Naive thymus-derived CD4-positive, alpha-beta T cell (primary cell): ENCODE measurements at regions of chr5 and their contacts with region 1.

Region 1: GRCh38 chr5:95961617-95962474 is at the start of gene ELL2:
- DNase-seq: peak; percentile 85 to 98 (median 90)
- ATAC-seq: peak; percentile 93
- H3K4me3 ChIP-seq: peak within 1 kb of the TSS; percentile 73
- H3K4me3 Mint-ChIP-seq: peak within 1 kb of the TSS; percentile 94 to 99 (median 96)
- H3K27ac ChIP-seq: peak within 1 kb of the TSS; percentile 90
- H3K27ac Mint-ChIP-seq: peak within 1 kb of the TSS; percentile 87 to 99 (median 98)
- H3K4me1 ChIP-seq: peaks cover 12 to 13% of the 10 kb centered on the region in 2 donors
- H3K4me1 Mint-ChIP-seq: peaks cover 30 to 43% (median 34%) of the 10 kb centered on the region in 7 donors
- H3K27me3 ChIP-seq: no peaks in the 10 kb centered on the region
- H3K27me3 Mint-ChIP-seq: peaks cover 0 to 3% (median 0%) of the 10 kb centered on the region in 5 donors
- total RNA-seq, gene ELL2: 12.6 to 65.8 (median 41.3) TPM

Region 2: DNA sequence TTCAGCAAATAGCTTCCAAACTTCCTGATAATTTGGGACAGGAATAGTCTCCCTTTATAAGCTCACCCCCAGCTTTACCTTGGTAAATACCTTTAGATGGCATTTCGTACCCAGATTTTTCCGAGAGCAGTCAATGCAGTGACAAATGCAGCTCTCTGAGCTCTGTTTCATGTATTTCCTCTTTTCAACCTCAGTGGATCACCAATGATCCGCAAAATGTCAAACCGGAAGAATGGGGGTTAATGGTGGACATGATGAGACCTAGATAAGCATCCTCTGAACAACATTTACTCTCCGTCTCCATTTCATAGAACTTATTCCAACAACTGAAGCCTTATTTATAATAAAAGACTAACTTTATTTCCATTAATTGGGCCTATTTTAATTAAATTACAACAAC is 904.2 kb before region 1 on chr5:
- CTCF ChIA-PET with region 1: no interaction called
- POLR2A ChIA-PET with region 1: no interaction called
- intact Hi-C with region 1: no loop called
- DNase-seq: no peak
- ATAC-seq: no peak
- H3K4me3 ChIP-seq: no peak overlapping the region
- H3K4me3 Mint-ChIP-seq: no peak overlapping the region
- H3K27ac ChIP-seq: no peak overlapping the region
- H3K27ac Mint-ChIP-seq: no peak overlapping the region
- H3K4me1 ChIP-seq: no peaks in the 10 kb centered on the region
- H3K4me1 Mint-ChIP-seq: peaks cover 0 to 3% (median 0%) of the 10 kb centered on the region in 7 donors
- H3K27me3 ChIP-seq: no peaks in the 10 kb centered on the region
- H3K27me3 Mint-ChIP-seq: peaks cover 0 to 2% (median 0%) of the 10 kb centered on the region in 5 donors

Region 3: GRCh38 chr5:95554647-95555548 is 406.9 kb before region 1 on chr5 and contains the starts of genes ARSK and SKIC3:
- CTCF ChIA-PET with region 1: no interaction called
- POLR2A ChIA-PET with region 1: no interaction called
- intact Hi-C with region 1: loop called (anchors 2 kb)
- DNase-seq: peak; percentile 76 to 98 (median 97)
- ATAC-seq: peak; percentile 93
- H3K4me3 ChIP-seq: peak within 1 kb of the TSS; percentile 71
- H3K4me3 Mint-ChIP-seq: peak within 1 kb of the TSS; percentile 90 to 100 (median 96)
- H3K27ac ChIP-seq: peak within 1 kb of the TSS; percentile 83
- H3K27ac Mint-ChIP-seq: peak within 1 kb of the TSS; percentile 92 to 98 (median 94)
- H3K4me1 ChIP-seq: peaks cover 20 to 27% of the 10 kb centered on the region in 2 donors
- H3K4me1 Mint-ChIP-seq: peaks cover 26 to 66% (median 47%) of the 10 kb centered on the region in 7 donors
- H3K27me3 ChIP-seq: no peaks in the 10 kb centered on the region
- H3K27me3 Mint-ChIP-seq: peaks cover 0 to 2% (median 0%) of the 10 kb centered on the region in 5 donors
- total RNA-seq, gene ARSK: 2.5 to 8.5 (median 4.5) TPM
- total RNA-seq, gene SKIC3: 74.6 to 103 (median 81.0) TPM

Region 4: GRCh38 chr5:95822542-95823181 is 139.2 kb before region 1 on chr5 and contains the start of gene GLRX:
- CTCF ChIA-PET with region 1: no interaction called
- POLR2A ChIA-PET with region 1: no interaction called
- intact Hi-C with region 1: loop called in 1 of 2 experiments (anchors 5 kb)
- DNase-seq: peak in 8 of 9 donors; percentile 48 to 62 (median 58)
- ATAC-seq: peak; percentile 52
- H3K4me3 ChIP-seq: peak within 1 kb of the TSS; percentile 93
- H3K4me3 Mint-ChIP-seq: peak within 1 kb of the TSS; percentile 91 to 100 (median 99)
- H3K27ac ChIP-seq: peak within 1 kb of the TSS; percentile 84
- H3K27ac Mint-ChIP-seq: peak within 1 kb of the TSS; percentile 91 to 97 (median 95)
- H3K4me1 ChIP-seq: peaks cover 38% of the 10 kb centered on the region in 2 donors
- H3K4me1 Mint-ChIP-seq: peaks cover 53 to 78% (median 61%) of the 10 kb centered on the region in 7 donors
- H3K27me3 ChIP-seq: no peaks in the 10 kb centered on the region
- H3K27me3 Mint-ChIP-seq: no peaks in the 10 kb centered on the region
- total RNA-seq, gene GLRX: 26.3 to 89.5 (median 55.6) TPM

Region 5: DNA sequence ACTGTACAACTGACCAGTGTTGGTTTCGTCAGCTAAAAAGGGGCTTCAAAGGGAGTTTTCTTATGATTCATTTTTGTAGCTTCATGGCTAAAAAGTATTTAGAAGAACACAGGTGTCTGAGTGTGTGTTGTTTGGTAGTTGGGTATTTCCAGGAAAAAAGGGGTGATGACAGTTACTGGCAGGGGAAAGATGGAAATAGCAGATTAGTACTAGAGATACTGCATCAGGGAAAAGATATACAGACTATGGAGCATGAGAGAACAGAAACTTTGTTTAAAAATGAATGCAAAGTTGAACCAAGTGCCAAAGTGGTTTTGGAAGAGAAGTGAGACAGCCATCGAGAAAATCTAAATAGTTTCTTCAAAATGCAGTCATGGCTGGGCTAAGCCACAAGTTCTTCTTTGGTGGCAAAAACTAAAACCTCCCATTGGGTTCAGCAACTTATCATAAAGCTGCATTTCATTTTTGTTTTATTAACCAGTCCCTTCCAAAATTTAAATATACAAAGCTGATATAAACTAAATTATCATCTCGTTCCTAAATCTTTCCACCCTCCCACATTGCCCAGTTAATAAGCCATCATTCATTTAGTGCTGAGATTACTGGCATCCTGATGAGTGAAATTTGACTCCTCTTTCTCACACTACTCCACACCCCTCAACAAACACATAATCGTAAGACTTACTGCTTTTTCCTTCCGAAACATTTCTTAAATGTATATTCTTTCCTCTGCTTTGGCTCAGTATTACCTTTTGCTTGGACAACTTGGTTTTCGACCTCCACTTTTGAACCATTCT is 33.7 kb before region 1 on chr5:
- CTCF ChIA-PET with region 1: no interaction called
- POLR2A ChIA-PET with region 1: no interaction called
- intact Hi-C with region 1: loop called in 1 of 2 experiments (anchors 2 kb)
- DNase-seq: no peak
- ATAC-seq: peak; percentile 5
- H3K4me3 ChIP-seq: no peak overlapping the region
- H3K4me3 Mint-ChIP-seq: peak overlapping the region in 1 of 10 donors; percentile 55
- H3K27ac ChIP-seq: no peak overlapping the region
- H3K27ac Mint-ChIP-seq: peak overlapping the region in 1 of 9 donors; percentile 82
- H3K4me1 ChIP-seq: no peaks in the 10 kb centered on the region
- H3K4me1 Mint-ChIP-seq: peaks cover 0 to 58% (median 6%) of the 10 kb centered on the region in 7 donors
- H3K27me3 ChIP-seq: no peaks in the 10 kb centered on the region
- H3K27me3 Mint-ChIP-seq: no peaks in the 10 kb centered on the region

Region 6: GRCh38 chr5:96264047-96264446 is 302.2 kb after region 1 on chr5:
- CTCF ChIA-PET with region 1: no interaction called
- POLR2A ChIA-PET with region 1: no interaction called
- intact Hi-C with region 1: no loop called
- DNase-seq: no peak
- ATAC-seq: no peak
- H3K4me3 ChIP-seq: no peak overlapping the region
- H3K4me3 Mint-ChIP-seq: no peak overlapping the region
- H3K27ac ChIP-seq: no peak overlapping the region
- H3K27ac Mint-ChIP-seq: no peak overlapping the region
- H3K4me1 ChIP-seq: no peaks in the 10 kb centered on the region
- H3K4me1 Mint-ChIP-seq: peaks cover 0 to 2% (median 0%) of the 10 kb centered on the region in 7 donors
- H3K27me3 ChIP-seq: no peaks in the 10 kb centered on the region
- H3K27me3 Mint-ChIP-seq: peaks cover 0 to 39% (median 18%) of the 10 kb centered on the region in 5 donors

Region 7: DNA sequence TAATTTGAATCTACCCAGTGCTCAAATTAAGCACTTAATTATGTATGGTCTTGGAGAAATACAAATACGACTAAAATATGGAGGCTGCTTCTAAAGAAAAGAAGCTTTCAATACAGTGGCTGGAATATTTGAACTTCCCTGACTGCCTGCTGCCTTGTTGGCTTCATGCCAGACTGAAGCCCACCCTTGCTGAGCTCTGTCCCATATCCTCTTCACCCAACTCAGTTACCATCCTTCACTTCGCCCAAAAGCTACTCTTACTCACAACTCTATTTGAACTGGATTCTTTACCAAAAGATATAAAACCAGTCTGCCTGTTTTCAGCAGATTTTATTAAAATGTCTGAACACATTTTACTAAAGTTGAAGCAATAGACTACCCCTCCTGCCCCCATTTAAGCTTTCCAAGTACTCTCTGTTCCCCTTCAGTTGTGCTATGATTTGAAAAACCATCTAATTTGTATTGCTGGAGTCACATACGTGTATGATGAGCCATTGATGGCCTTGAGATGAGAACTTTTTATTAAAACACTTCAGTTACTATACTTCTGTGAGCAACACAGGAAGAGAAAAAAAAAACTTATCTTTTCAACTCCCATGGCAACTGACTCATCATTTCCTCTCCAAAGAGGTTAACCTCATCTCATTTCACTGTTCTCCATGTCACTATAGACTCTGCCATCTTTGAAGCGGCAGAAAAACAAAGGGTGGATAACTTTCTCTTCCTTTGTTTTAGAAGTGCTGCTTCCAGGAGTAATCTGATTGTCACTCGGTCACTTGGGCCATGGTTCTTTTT is 575.3 kb after region 1 on chr5:
- CTCF ChIA-PET with region 1: no interaction called
- POLR2A ChIA-PET with region 1: no interaction called
- intact Hi-C with region 1: loop called (anchors 1 to 2 kb)
- DNase-seq: peak in 7 of 9 donors; percentile 54 to 79 (median 73)
- ATAC-seq: peak; percentile 97
- H3K4me3 ChIP-seq: peak overlapping the region; percentile 14
- H3K4me3 Mint-ChIP-seq: peak overlapping the region in 9 of 10 donors; percentile 26 to 76 (median 61)
- H3K27ac ChIP-seq: peak overlapping the region; percentile 41
- H3K27ac Mint-ChIP-seq: peak overlapping the region; percentile 82 to 94 (median 88)
- H3K4me1 ChIP-seq: peaks cover 20 to 23% of the 10 kb centered on the region in 2 donors
- H3K4me1 Mint-ChIP-seq: peaks cover 15 to 41% (median 32%) of the 10 kb centered on the region in 7 donors
- H3K27me3 ChIP-seq: no peaks in the 10 kb centered on the region
- H3K27me3 Mint-ChIP-seq: peaks cover 0 to 6% (median 0%) of the 10 kb centered on the region in 5 donors

Region 8: GRCh38 chr5:96807075-96807654 is 845.3 kb after region 1 on chr5:
- CTCF ChIA-PET with region 1: no interaction called
- POLR2A ChIA-PET with region 1: no interaction called
- intact Hi-C with region 1: loop called (anchors 5 kb)
- DNase-seq: peak in 1 of 9 donors; percentile 67
- ATAC-seq: peak; percentile 17
- H3K4me3 ChIP-seq: peak overlapping the region; percentile 85
- H3K4me3 Mint-ChIP-seq: peak overlapping the region; percentile 90 to 100 (median 96)
- H3K27ac ChIP-seq: peak overlapping the region; percentile 99
- H3K27ac Mint-ChIP-seq: peak overlapping the region; percentile 98 to 100 (median 99)
- H3K4me1 ChIP-seq: peaks cover 40 to 69% of the 10 kb centered on the region in 2 donors
- H3K4me1 Mint-ChIP-seq: peaks cover 57 to 92% (median 89%) of the 10 kb centered on the region in 7 donors
- H3K27me3 ChIP-seq: no peaks in the 10 kb centered on the region
- H3K27me3 Mint-ChIP-seq: peaks cover 0 to 2% (median 0%) of the 10 kb centered on the region in 5 donors